ENCODE measurements at regions of chr1 and their contacts with region 1.

Region 1: DNA sequence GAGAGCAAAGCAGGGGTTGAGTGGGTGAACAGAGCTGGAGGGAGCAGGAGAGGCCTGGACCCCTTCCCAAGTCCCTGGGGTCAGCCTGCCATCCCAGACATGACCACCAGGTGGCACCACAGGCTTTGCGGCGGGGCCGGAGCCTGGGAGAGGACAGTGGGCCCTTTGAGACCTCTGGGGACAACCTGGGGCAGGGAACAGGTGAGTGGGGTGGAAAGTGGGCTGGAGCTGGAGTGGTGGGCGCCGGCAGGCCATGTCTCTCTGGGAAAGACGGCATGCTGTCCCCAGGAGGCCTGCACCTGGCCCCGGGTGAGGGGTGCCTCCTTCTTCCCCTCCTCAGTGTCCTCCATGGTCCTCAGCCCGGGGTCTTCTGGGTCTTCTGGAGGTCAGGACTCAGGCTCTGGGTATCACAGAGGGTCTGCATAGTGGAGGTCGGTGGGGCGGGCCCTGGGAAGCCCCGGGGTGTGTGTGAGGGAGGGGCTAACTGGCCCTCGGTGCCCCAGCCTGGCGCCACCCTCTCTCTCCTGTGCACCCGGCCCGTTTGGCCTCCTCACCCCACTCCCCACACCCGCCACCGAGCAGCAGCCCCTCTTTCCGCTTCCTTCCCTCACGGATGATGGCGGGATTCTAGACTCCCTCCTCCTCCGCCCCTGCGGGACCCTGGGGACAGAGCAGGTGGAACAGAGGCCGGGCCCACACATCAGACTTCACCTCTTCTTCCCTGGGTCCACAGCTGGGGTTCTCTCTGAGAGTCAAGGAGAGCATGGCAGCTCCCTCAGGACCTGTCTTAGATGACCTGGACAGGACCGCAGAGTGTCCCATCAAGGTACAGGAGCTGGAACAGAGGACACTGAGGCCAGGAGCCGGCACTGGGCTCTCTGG is 28.4 kb upstream of the PKP1 start:
- DNase-seq: peak; percentile 52 to 70
- ATAC-seq: peak; percentile 64 to 85 (median 78)
- H3K4me3 ChIP-seq: no peak overlapping the region
- H3K27ac ChIP-seq: no peak overlapping the region
- H3K4me1 ChIP-seq: peaks cover 1 to 7% (median 5%) of the 10 kb centered on the region in 9 donors
- H3K27me3 ChIP-seq: peaks cover 0 to 10% (median 6%) of the 10 kb centered on the region in 7 donors
- CTCF ChIP-seq: peak; percentile 87 to 99 (median 95)

Region 2: GRCh38 chr1:201229771-201230635 is 24.9 kb before region 1 on chr1:
- intact Hi-C with region 1: no loop called
- DNase-seq: no peak
- ATAC-seq: no peak
- H3K4me3 ChIP-seq: no peak overlapping the region
- H3K27ac ChIP-seq: no peak overlapping the region
- H3K4me1 ChIP-seq: no peaks in the 10 kb centered on the region
- H3K27me3 ChIP-seq: peaks cover 0 to 13% (median 0%) of the 10 kb centered on the region in 7 donors
- CTCF ChIP-seq: no peak

Region 3: DNA sequence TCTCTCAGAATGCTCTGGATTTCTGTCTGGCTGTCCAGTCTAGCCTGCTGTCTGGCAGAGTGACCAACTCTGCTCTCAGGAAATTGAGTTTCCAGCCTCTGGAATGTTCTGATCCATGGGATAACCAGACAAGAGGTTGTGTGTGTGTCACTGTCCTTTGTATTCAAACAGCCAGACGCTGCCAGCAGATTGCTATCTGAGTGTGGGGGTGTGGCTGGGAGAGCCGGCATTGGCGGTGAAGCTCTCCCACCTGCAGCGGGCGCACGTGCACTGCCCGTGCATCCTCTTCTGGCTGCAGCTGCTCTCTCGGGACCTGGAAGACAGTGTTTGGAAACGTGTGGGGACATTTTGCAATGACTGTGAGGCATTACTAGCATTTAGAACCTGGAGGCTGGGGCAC is 54.6 kb after region 1 on chr1:
- intact Hi-C with region 1: loop called in 1 of 10 experiments (anchors 5 kb)
- DNase-seq: peak; percentile 63 to 78
- ATAC-seq: peak; percentile 72 to 87 (median 81)
- H3K4me3 ChIP-seq: no peak overlapping the region
- H3K27ac ChIP-seq: peak overlapping the region in 8 of 10 donors; percentile 35 to 78 (median 58)
- H3K4me1 ChIP-seq: peaks cover 17 to 43% (median 31%) of the 10 kb centered on the region in 9 donors
- H3K27me3 ChIP-seq: peaks cover 0 to 17% (median 0%) of the 10 kb centered on the region in 7 donors
- CTCF ChIP-seq: peak in 3 of 9 donors; percentile 38 to 48 (median 47)

Region 4: GRCh38 chr1:201348211-201348566 is 93.3 kb after region 1 on chr1:
- intact Hi-C with region 1: loop called in 9 of 10 experiments (anchors 1 to 5 kb)
- DNase-seq: no peak
- ATAC-seq: peak in 7 of 8 donors; percentile 5 to 59 (median 48)
- H3K4me3 ChIP-seq: no peak overlapping the region
- H3K27ac ChIP-seq: no peak overlapping the region
- H3K4me1 ChIP-seq: peaks cover 0 to 12% (median 3%) of the 10 kb centered on the region in 9 donors
- H3K27me3 ChIP-seq: peaks cover 0 to 8% (median 0%) of the 10 kb centered on the region in 7 donors
- CTCF ChIP-seq: peak; percentile 33 to 61 (median 50)

Region 5: GRCh38 chr1:201361652-201362504 is 107.0 kb after region 1 on chr1:
- intact Hi-C with region 1: loop called in 8 of 10 experiments (anchors 1 to 5 kb)
- DNase-seq: no peak
- ATAC-seq: peak in 5 of 8 donors; percentile 1 to 23 (median 16)
- H3K4me3 ChIP-seq: no peak overlapping the region
- H3K27ac ChIP-seq: peak overlapping the region in 2 of 10 donors; percentile 7 to 68
- H3K4me1 ChIP-seq: peaks cover 0 to 35% (median 5%) of the 10 kb centered on the region in 9 donors
- H3K27me3 ChIP-seq: no peaks in the 10 kb centered on the region
- CTCF ChIP-seq: peak; percentile 59 to 82 (median 73)

Measured in heart right ventricle (tissue), 16 donors.